ENCODE measurements at regions of chr5 and their contacts with region 1.

Region 1: GRCh38 chr5:149990518-149991376 is 9.7 kb downstream of the TIGD6 start:
- DNase-seq: peak; percentile 77
- H3K4me3 ChIP-seq: no peak overlapping the region
- H3K27ac ChIP-seq: no peak overlapping the region
- H3K4me1 ChIP-seq: peaks cover 0 to 6% (median 0%) of the 10 kb centered on the region in 6 donors
- H3K27me3 ChIP-seq: no peaks in the 10 kb centered on the region
- CTCF ChIP-seq: peak; percentile 60 to 91 (median 85)
- POLR2A ChIP-seq: no peak

Region 2: DNA sequence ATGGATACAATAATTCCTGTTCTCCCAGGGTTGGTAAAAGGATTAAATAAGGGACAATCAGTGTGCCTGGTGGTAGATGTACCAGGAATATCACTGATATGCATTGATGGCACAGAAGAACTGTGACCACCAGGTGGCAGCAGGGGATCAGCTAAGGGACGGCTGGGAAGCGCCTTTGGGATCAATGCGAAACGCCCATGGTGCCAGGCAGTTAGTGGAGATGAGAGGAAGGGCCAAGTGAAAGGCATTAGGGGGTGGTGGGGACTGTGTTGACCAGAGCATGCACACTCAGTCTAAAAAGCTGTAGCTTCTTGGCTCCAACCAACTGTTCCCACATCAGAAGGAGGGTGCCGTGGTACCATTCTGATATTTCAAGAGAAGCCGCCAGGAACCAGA is 353.9 kb before region 1 on chr5:
- intact Hi-C with region 1: loop called (anchors 5 kb)
- DNase-seq: no peak
- H3K4me3 ChIP-seq: no peak overlapping the region
- H3K27ac ChIP-seq: no peak overlapping the region
- H3K4me1 ChIP-seq: peaks cover 0 to 10% (median 0%) of the 10 kb centered on the region in 6 donors
- H3K27me3 ChIP-seq: no peaks in the 10 kb centered on the region
- CTCF ChIP-seq: peak; percentile 68 to 93 (median 84)
- POLR2A ChIP-seq: no peak

Region 3: GRCh38 chr5:149834246-149834855 is 156.4 kb before region 1 on chr5:
- intact Hi-C with region 1: loop called (anchors 2 kb)
- DNase-seq: no peak
- H3K4me3 ChIP-seq: no peak overlapping the region
- H3K27ac ChIP-seq: no peak overlapping the region
- H3K4me1 ChIP-seq: no peaks in the 10 kb centered on the region
- H3K27me3 ChIP-seq: no peaks in the 10 kb centered on the region
- CTCF ChIP-seq: peak in 10 of 11 experiments; percentile 39 to 73 (median 64)
- POLR2A ChIP-seq: no peak

Region 4: GRCh38 chr5:150044329-150044681 is 53.6 kb after region 1 on chr5:
- intact Hi-C with region 1: no loop called
- DNase-seq: no peak
- H3K4me3 ChIP-seq: no peak overlapping the region
- H3K27ac ChIP-seq: peak overlapping the region in 2 of 8 donors; percentile 42 to 45
- H3K4me1 ChIP-seq: peaks cover 3 to 40% (median 17%) of the 10 kb centered on the region in 6 donors
- H3K27me3 ChIP-seq: no peaks in the 10 kb centered on the region
- CTCF ChIP-seq: no peak
- POLR2A ChIP-seq: no peak

Region 5: DNA sequence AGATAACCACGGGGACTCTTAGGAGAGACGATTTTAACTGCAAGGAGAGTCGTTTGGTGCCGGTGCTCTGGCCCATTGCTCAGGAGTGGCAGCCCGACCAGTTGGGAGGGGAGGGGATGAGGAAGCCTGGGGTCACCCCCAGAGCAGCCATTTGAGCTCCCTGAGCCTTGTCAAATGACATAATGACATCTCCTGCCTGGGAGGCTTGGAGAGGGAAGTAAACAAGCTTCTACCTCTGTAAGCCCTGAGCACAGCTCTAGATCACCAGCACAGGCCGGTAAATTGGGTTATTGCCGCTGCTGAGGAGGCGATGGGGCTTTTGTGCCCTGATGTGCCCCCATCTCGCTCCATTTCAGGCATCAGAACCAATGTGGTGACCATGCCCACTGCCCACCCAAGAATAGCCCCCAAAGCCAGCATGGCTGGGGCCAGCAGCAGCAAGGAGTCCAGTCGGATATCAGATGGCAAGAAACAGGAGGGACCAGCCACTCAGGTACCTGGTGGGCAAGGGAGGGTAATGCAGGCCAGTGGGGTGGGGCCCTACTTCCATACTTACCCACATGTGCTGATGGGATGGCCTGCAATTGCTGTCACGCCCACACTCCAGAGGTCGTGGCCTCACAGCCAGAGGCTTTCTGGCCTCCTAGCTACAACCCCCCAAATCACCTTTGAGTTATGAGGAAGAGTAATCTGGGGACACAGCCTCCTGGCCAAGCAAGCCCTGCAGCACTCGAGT is 399.0 kb after region 1 on chr5:
- intact Hi-C with region 1: no loop called
- DNase-seq: no peak
- H3K4me3 ChIP-seq: no peak overlapping the region
- H3K27ac ChIP-seq: no peak overlapping the region
- H3K4me1 ChIP-seq: no peaks in the 10 kb centered on the region
- H3K27me3 ChIP-seq: no peaks in the 10 kb centered on the region
- CTCF ChIP-seq: no peak
- POLR2A ChIP-seq: no peak

Measured in spleen (tissue), 13 donors.